PC-9 (cell line): ENCODE measurements at regions of chr3 and their contacts with region 1.

Region 1: GRCh38 chr3:101433653-101434052 is 79.4 kb downstream of the SENP7 start:
- DNase-seq: peak in 1 of 2 experiments; percentile 19
- H3K4me3 ChIP-seq: no peak overlapping the region
- H3K27ac ChIP-seq: no peak overlapping the region
- H3K4me1 ChIP-seq: no peaks in the 10 kb centered on the region
- H3K27me3 ChIP-seq: no peaks in the 10 kb centered on the region
- CTCF ChIP-seq: no peak

Region 2: GRCh38 chr3:101319531-101319930 is 114.1 kb before region 1 on chr3:
- CTCF ChIA-PET with region 1: interaction called, 21 read pairs
- POLR2A ChIA-PET with region 1: no interaction called
- intact Hi-C with region 1: no loop called
- DNase-seq: no peak
- H3K4me3 ChIP-seq: no peak overlapping the region
- H3K27ac ChIP-seq: no peak overlapping the region
- H3K4me1 ChIP-seq: no peaks in the 10 kb centered on the region
- H3K27me3 ChIP-seq: no peaks in the 10 kb centered on the region
- CTCF ChIP-seq: no peak